ENCODE measurements at regions of chr2 and their contacts with region 1.

Region 1: GRCh38 chr2:237072067-237072931 is 13.4 kb upstream of the COPS8 start:
- DNase-seq: peak; percentile 61
- ATAC-seq: 0 out of 2 replicates have a peak, but pooled peaks have one; percentile 21
- H3K4me3 ChIP-seq: no peak overlapping the region
- H3K27ac ChIP-seq: no peak overlapping the region
- H3K4me1 ChIP-seq: peaks cover 20% of the 10 kb centered on the region
- H3K27me3 ChIP-seq: no peaks in the 10 kb centered on the region
- CTCF ChIP-seq: peak; percentile 90
- POLR2A ChIP-seq: no peak
- RAD21 ChIP-seq: peak; percentile 83

Region 2: DNA sequence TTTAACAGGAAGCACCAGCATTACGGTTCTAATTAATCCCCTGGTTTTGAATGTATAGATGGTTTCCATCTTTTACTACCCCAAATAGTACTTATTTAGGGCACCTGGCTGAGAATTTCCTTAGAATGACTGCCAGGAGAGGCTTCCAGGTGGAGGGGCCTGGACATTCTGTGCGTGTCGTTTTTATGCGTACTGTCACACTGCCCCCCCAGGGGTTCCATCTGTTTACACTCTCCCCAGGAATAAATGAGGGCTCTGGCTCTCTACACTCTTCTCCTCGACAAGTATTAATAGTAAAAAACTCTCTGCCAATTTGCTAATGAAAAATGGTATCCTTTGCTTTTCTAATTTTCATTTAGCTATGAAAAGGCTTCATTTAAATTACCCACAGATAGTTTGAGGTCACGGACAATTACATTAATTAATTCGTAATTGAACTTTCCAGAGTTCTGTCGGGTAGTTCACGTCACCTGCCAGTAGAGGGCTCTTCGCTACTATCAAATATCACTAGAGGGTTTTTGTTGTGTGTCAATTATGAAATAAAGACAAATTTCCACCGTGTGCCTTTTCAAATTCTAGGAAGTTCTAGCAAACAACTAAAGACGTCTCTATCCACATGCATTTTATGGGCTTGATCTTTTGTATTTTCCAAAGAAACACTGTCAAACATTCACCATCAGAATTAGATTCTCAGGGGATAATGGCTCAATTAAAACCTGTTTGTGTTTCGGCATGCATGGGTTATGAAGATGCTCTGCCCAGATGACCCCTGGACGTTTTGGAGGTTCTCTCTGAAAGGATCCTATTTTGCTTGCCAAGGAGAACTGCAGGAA is 719.3 kb before region 1 on chr2:
- CTCF ChIA-PET with region 1: interaction called, 4 read pairs
- POLR2A ChIA-PET with region 1: no interaction called
- dilution Hi-C with region 1: no loop called
- in situ Hi-C with region 1: no loop called
- intact Hi-C with region 1: loop called (anchors 1 kb)
- DNase-seq: peak; percentile 29
- ATAC-seq: peak; percentile 72
- H3K4me3 ChIP-seq: no peak overlapping the region
- H3K27ac ChIP-seq: no peak overlapping the region
- H3K4me1 ChIP-seq: no peaks in the 10 kb centered on the region
- H3K27me3 ChIP-seq: peaks cover 7% of the 10 kb centered on the region; the same call in 1 of the 2 replicates
- CTCF ChIP-seq: peak; percentile 83
- POLR2A ChIP-seq: no peak
- RAD21 ChIP-seq: peak; percentile 75

Region 3: GRCh38 chr2:237391140-237391723 is 318.9 kb after region 1 on chr2:
- CTCF ChIA-PET with region 1: no interaction called
- POLR2A ChIA-PET with region 1: no interaction called
- dilution Hi-C with region 1: no loop called
- in situ Hi-C with region 1: no loop called
- intact Hi-C with region 1: no loop called
- DNase-seq: no peak
- ATAC-seq: no peak
- H3K4me3 ChIP-seq: no peak overlapping the region
- H3K27ac ChIP-seq: no peak overlapping the region
- H3K4me1 ChIP-seq: peaks cover 23% of the 10 kb centered on the region
- H3K27me3 ChIP-seq: no peaks in the 10 kb centered on the region
- CTCF ChIP-seq: no peak
- POLR2A ChIP-seq: no peak
- RAD21 ChIP-seq: no peak